ENCODE measurements at regions of chr14 and their contacts with region 1.

Region 1: GRCh38 chr14:90758028-90758889 is 58.0 kb downstream of the TTC7B start:
- DNase-seq: peak; percentile 95
- ATAC-seq: peak; percentile 88
- H3K4me3 Mint-ChIP-seq: peak overlapping the region; percentile 79
- H3K27ac Mint-ChIP-seq: peak overlapping the region; percentile 86
- H3K4me1 Mint-ChIP-seq: peaks cover 24% of the 10 kb centered on the region
- H3K27me3 Mint-ChIP-seq: peaks cover 2% of the 10 kb centered on the region
- CTCF ChIP-seq: no peak

Region 2: GRCh38 chr14:88824314-88825077 is 1933.8 kb before region 1 on chr14 and contains the start of gene TTC8:
- CTCF ChIA-PET with region 1: no interaction called
- POLR2A ChIA-PET with region 1: no interaction called
- intact Hi-C with region 1: loop called (anchors 2 kb)
- DNase-seq: peak; percentile 77
- ATAC-seq: peak; percentile 97
- H3K4me3 Mint-ChIP-seq: peak within 1 kb of the TSS; percentile 88
- H3K27ac Mint-ChIP-seq: peak within 1 kb of the TSS; percentile 100
- H3K4me1 Mint-ChIP-seq: peaks cover 14% of the 10 kb centered on the region
- H3K27me3 Mint-ChIP-seq: peaks cover 11% of the 10 kb centered on the region
- CTCF ChIP-seq: no peak
- total RNA-seq, gene TTC8: 4.8 and 6.0 TPM in 2 replicates

Region 3: DNA sequence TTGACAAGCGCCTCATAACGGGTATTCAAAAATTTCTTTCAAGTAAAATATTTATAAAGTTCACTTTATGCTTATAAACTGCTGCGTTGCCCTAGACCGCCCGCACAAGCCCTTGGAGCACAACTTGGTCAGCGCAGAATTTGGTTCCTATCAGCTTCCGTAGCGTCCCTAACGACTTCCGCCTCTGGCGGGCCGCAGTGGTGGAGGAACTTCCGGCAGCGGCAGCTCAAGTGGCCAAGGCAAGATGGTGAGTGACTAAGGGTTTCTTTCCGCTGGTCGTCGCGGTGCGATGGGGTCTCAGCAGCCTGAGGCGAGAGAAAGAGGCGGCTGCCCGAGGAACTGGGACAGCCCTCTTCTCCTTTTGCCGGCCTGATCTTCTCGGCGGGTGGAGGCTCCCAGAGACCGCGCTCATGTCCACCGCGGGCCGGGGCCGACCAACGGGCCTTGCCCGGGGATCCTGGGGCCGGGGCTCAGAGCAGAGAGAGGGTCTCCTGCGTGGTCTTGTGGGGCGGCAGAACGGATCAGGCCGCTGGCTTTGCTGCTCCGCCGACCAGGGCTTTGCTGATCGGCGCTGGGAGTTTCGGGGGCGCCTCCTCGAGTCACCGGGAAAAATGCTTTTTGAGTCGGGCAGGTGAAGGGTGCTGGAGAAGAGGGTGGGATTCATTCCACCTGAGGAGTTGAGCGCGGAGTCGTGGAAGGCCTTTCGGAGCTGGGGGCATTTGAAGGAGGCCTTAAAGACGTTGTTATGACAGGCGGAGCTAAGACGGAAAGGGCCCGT is 501.7 kb before region 1 on chr14 and contains the start of gene PSMC1:
- CTCF ChIA-PET with region 1: interaction called, 3 read pairs
- POLR2A ChIA-PET with region 1: interaction called, 3 read pairs
- intact Hi-C with region 1: loop called (anchors 1 kb)
- DNase-seq: peak; percentile 76
- ATAC-seq: peak; percentile 94
- H3K4me3 Mint-ChIP-seq: peak within 1 kb of the TSS; percentile 98
- H3K27ac Mint-ChIP-seq: peak within 1 kb of the TSS; percentile 92
- H3K4me1 Mint-ChIP-seq: peaks cover 40% of the 10 kb centered on the region
- H3K27me3 Mint-ChIP-seq: no peaks in the 10 kb centered on the region
- CTCF ChIP-seq: no peak
- total RNA-seq, gene PSMC1: 101 and 102 TPM in 2 replicates

Region 4: GRCh38 chr14:90331497-90332435 is 426.5 kb before region 1 on chr14 and contains the start of gene NRDE2:
- CTCF ChIA-PET with region 1: no interaction called
- POLR2A ChIA-PET with region 1: interaction called, 3 read pairs
- intact Hi-C with region 1: loop called (anchors 1 kb)
- DNase-seq: peak; percentile 95
- ATAC-seq: peak; percentile 98
- H3K4me3 Mint-ChIP-seq: peak within 1 kb of the TSS; percentile 93
- H3K27ac Mint-ChIP-seq: peak within 1 kb of the TSS; percentile 95
- H3K4me1 Mint-ChIP-seq: peaks cover 25% of the 10 kb centered on the region
- H3K27me3 Mint-ChIP-seq: peaks cover 19% of the 10 kb centered on the region
- CTCF ChIP-seq: no peak
- total RNA-seq, gene NRDE2: 35.3 and 37.1 TPM in 2 replicates

Region 5: GRCh38 chr14:90720336-90720735 is 37.9 kb before region 1 on chr14:
- CTCF ChIA-PET with region 1: no interaction called
- POLR2A ChIA-PET with region 1: no interaction called
- intact Hi-C with region 1: no loop called
- DNase-seq: no peak
- ATAC-seq: no peak
- H3K4me3 Mint-ChIP-seq: no peak overlapping the region
- H3K27ac Mint-ChIP-seq: no peak overlapping the region
- H3K4me1 Mint-ChIP-seq: no peaks in the 10 kb centered on the region
- H3K27me3 Mint-ChIP-seq: peaks cover 2% of the 10 kb centered on the region
- CTCF ChIP-seq: no peak

Region 6: DNA sequence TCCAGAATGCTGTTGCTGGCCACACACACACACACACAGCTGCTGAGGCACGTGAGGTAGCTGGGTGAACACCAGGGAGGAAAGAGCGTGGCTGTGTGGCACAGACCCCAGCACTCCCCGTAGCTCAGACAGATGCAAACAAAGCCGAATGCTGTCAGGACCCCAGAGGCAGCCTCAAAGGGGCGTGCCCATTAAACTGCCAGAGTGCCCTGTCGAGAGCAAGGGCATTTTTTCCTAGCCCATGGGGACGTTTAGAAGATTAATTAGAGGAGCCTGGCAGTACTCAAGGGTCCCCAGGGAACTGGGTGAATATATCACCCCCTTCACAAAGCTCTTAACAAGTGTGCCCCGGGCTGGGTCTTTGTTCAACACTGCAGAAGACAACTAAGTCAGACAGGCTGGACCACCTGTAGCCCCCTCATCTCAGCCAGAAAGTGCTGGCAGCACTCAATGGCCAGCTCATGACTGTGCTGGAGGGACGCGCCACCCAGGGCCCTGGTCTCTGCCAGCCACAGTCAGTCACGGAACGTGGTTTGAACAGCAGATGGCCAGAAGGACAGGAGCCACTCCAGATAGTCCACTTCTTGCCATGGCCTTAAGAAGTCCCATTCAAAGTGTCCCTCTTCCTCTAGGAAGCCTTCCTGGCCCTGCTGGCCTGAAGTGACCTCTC is 20.4 kb after region 1 on chr14:
- CTCF ChIA-PET with region 1: no interaction called
- POLR2A ChIA-PET with region 1: no interaction called
- intact Hi-C with region 1: no loop called
- DNase-seq: no peak
- ATAC-seq: no peak
- H3K4me3 Mint-ChIP-seq: no peak overlapping the region
- H3K27ac Mint-ChIP-seq: no peak overlapping the region
- H3K4me1 Mint-ChIP-seq: no peaks in the 10 kb centered on the region
- H3K27me3 Mint-ChIP-seq: no peaks in the 10 kb centered on the region
- CTCF ChIP-seq: no peak

Region 7: GRCh38 chr14:90815822-90816700 is 57.8 kb after region 1 on chr14 and contains the start of gene TTC7B:
- CTCF ChIA-PET with region 1: interaction called, 5 read pairs
- POLR2A ChIA-PET with region 1: no interaction called
- intact Hi-C with region 1: loop called (anchors 2 kb)
- DNase-seq: peak; percentile 50
- ATAC-seq: peak; percentile 93
- H3K4me3 Mint-ChIP-seq: peak within 1 kb of the TSS; percentile 69
- H3K27ac Mint-ChIP-seq: peak within 1 kb of the TSS; percentile 19
- H3K4me1 Mint-ChIP-seq: no peaks in the 10 kb centered on the region
- H3K27me3 Mint-ChIP-seq: peaks cover 11% of the 10 kb centered on the region
- CTCF ChIP-seq: no peak
- total RNA-seq, gene TTC7B: 1.9 and 2.5 TPM in 2 replicates